K562 (cell line): ENCODE measurements at regions of chr7 and their contacts with region 1.

Region 1: GRCh38 chr7:128821724-128822123 is 8.5 kb upstream of the FLNC start:
- DNase-seq: no peak
- ATAC-seq: peak; percentile 6; the same call in 2 of the 3 replicates
- H3K4me3 ChIP-seq: no peak overlapping the region
- H3K27ac ChIP-seq: no peak overlapping the region
- H3K4me1 ChIP-seq: peaks cover 0 to 4% of the 10 kb centered on the region in 2 experiments; a peak in 3 of 5 replicates
- H3K27me3 ChIP-seq: no peaks in the 10 kb centered on the region
- CTCF ChIP-seq: no peak
- EP300 ChIP-seq: no peak
- POLR2A ChIP-seq: no peak
- RAD21 ChIP-seq: no peak

Region 2: DNA sequence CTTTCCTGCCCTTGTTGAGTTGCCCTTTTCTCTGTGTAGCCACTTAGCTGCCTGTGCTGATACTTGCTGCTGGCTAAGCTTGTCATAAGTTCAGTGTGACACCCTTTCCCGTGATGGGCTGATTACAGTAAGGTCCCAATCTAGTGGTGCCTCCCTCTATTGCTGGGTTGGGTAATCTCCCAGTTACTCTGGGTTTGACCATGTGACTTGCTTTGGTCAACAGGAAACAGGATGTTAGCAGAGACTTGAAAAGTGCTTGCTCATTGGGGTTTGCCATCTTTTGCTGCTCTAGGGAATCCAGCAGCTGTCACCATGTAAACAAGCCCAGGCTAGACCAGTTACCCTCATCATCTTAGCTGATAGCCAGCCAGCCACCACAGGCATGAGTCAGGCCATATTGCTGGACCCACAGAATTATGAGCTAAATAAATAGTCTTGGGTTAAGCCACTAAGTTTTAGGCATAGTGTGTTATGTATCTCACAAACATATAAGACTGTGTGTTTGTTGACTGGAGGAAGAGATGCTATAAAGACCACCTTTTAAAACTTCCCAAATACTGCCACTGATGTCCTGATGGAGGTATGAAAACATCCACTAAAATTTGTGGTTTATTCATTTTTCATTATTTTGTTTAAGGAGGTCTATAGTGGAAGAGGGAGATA is 584.7 kb before region 1 on chr7:
- CTCF ChIA-PET with region 1: no interaction called
- POLR2A ChIA-PET with region 1: no interaction called
- in situ Hi-C with region 1: no loop called
- intact Hi-C with region 1: no loop called
- DNase-seq: peak in 2 of 4 experiments; percentile 52 to 59
- ATAC-seq: peak; percentile 89
- H3K4me3 ChIP-seq: no peak overlapping the region
- H3K27ac ChIP-seq: peak overlapping the region; percentile 3; the same call in 1 of the 3 replicates
- H3K4me1 ChIP-seq: peaks cover 0 to 7% of the 10 kb centered on the region in 2 experiments; a peak in 2 of 5 replicates
- H3K27me3 ChIP-seq: peaks cover 36 to 58% of the 10 kb centered on the region in 2 experiments
- CTCF ChIP-seq: no peak
- EP300 ChIP-seq: peak; percentile 61
- POLR2A ChIP-seq: no peak
- RAD21 ChIP-seq: no peak

Region 3: DNA sequence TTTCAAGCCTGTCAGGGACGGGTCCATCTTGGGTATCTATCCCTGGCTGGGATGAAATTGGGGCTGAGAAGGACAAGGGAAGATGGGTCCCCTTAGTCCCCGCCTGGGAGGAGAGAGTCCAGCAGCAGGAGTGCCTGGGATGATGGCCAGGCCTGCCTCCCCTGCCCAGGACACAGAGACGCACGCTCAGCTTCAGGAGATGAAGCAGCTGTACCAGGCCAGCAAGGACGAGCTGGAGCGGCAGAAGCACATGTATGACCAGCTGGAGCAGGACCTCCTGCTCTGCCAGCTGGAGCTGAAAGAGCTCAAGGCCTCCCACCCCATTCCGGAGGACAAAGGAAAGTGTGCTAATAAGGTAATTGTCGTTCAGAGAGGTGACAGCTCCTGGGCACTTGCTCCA is 14.5 kb before region 1 on chr7:
- CTCF ChIA-PET with region 1: no interaction called
- POLR2A ChIA-PET with region 1: interaction called, 20 read pairs
- in situ Hi-C with region 1: no loop called
- intact Hi-C with region 1: no loop called
- DNase-seq: no peak
- ATAC-seq: no peak
- H3K4me3 ChIP-seq: no peak overlapping the region
- H3K27ac ChIP-seq: no peak overlapping the region
- H3K4me1 ChIP-seq: peaks cover 5 to 7% of the 10 kb centered on the region in 2 experiments; a peak in 4 of 5 replicates
- H3K27me3 ChIP-seq: no peaks in the 10 kb centered on the region
- CTCF ChIP-seq: no peak
- EP300 ChIP-seq: no peak
- POLR2A ChIP-seq: no peak
- RAD21 ChIP-seq: no peak

Region 4: GRCh38 chr7:128968624-128969023 is 146.9 kb after region 1 on chr7:
- CTCF ChIA-PET with region 1: no interaction called
- POLR2A ChIA-PET with region 1: no interaction called
- in situ Hi-C with region 1: no loop called
- intact Hi-C with region 1: no loop called
- DNase-seq: no peak
- ATAC-seq: no peak
- H3K4me3 ChIP-seq: no peak overlapping the region
- H3K27ac ChIP-seq: no peak overlapping the region
- H3K4me1 ChIP-seq: no peaks in the 10 kb centered on the region
- H3K27me3 ChIP-seq: no peaks in the 10 kb centered on the region
- CTCF ChIP-seq: no peak
- EP300 ChIP-seq: no peak
- POLR2A ChIP-seq: no peak
- RAD21 ChIP-seq: no peak

Region 5: DNA sequence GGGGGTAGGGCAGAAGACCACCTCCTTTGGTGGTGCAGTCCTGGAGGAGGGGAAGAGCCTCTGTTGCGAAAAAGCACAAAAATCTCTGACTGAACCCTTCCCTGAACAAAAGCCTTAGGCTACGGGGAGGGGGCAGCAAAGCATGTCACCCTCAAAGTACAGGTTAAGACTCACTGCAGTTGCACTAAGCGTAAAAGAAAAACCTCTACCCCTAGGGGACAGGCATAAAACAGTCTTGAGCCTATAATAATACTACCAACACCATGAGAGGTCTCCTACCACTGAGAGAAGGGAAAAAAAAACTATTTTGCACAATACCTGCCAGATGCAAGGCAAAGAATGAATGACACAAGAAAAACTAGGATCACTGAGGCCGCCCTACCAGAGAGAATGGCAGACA is 215.9 kb after region 1 on chr7:
- CTCF ChIA-PET with region 1: no interaction called
- POLR2A ChIA-PET with region 1: no interaction called
- in situ Hi-C with region 1: no loop called
- intact Hi-C with region 1: no loop called
- DNase-seq: peak in 1 of 4 experiments; percentile 17
- ATAC-seq: peak; percentile 29
- H3K4me3 ChIP-seq: no peak overlapping the region
- H3K27ac ChIP-seq: no peak overlapping the region
- H3K4me1 ChIP-seq: no peaks in the 10 kb centered on the region; a peak in 1 of 5 replicates
- H3K27me3 ChIP-seq: no peaks in the 10 kb centered on the region
- CTCF ChIP-seq: no peak
- EP300 ChIP-seq: no peak
- POLR2A ChIP-seq: no peak
- RAD21 ChIP-seq: no peak